Activated T-helper 1 cell treated with anti-CD3 and anti-CD28 coated beads, Interleukin-12 subunit alpha, Interleukin-12 subunit beta, Interleukin-2, Interleukin-4 antibody, amounts not matched to agents 30 ng/mL and 10 ng/mL and 1 ng/mL, durations not matched to agents 14 hours and 24 hours and 36 hours (primary cell): ENCODE measurements at regions of chr13 and their contacts with region 1.

Region 1: DNA sequence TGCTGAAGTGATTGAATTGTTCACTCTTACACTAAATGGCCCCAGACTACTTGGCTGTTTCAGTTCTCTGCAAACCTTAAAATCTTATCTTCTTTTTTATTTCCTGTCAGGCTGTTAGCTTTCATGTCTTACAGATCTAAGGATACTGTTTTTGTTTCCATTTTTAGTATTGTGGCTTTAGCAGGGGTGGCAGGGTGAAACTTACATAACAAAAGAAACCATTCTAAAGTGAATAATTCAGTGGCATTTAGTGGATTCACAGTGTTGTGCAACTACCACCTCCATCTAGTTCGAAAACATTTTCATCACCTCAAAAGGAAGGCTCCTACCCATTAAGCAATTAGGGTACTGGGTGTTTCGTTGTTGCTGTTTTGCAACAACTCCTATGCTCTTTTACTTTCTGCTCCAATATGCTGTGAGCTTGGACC is 19.8 kb downstream of the TMEM272 start:
- DNase-seq: no peak
- H3K4me3 Mint-ChIP-seq: peak overlapping the region; percentile 8
- H3K27ac Mint-ChIP-seq: peak overlapping the region; percentile 71
- H3K4me1 Mint-ChIP-seq: peaks cover 84% of the 10 kb centered on the region
- H3K27me3 Mint-ChIP-seq: peaks cover 4% of the 10 kb centered on the region

Region 2: DNA sequence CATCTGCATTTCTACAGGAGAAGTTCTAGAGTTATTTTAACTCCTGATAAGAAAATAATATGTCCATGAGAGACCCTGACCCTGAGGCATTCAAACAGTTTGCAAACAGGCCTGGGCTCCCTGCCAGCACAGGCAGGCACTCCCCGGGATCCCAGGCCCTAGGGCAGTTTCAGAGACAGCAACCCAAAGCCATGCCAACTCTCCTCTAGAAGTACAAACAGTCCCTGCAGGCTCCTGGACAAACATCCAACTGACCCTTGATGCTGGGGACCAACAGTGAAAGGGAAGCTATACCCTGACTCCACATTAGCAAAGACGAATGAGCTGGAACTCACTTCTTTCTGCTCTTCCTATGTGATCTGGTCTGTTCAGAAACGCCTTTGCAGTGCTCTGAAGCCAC is 81.4 kb after region 1 on chr13:
- intact Hi-C with region 1: loop called (anchors 5 kb)
- DNase-seq: no peak
- H3K4me3 Mint-ChIP-seq: no peak overlapping the region
- H3K27ac Mint-ChIP-seq: no peak overlapping the region
- H3K4me1 Mint-ChIP-seq: peaks cover 35% of the 10 kb centered on the region
- H3K27me3 Mint-ChIP-seq: no peaks in the 10 kb centered on the region